H1 (cell line): ENCODE measurements at regions of chr17 and their contacts with region 1.

Region 1: DNA sequence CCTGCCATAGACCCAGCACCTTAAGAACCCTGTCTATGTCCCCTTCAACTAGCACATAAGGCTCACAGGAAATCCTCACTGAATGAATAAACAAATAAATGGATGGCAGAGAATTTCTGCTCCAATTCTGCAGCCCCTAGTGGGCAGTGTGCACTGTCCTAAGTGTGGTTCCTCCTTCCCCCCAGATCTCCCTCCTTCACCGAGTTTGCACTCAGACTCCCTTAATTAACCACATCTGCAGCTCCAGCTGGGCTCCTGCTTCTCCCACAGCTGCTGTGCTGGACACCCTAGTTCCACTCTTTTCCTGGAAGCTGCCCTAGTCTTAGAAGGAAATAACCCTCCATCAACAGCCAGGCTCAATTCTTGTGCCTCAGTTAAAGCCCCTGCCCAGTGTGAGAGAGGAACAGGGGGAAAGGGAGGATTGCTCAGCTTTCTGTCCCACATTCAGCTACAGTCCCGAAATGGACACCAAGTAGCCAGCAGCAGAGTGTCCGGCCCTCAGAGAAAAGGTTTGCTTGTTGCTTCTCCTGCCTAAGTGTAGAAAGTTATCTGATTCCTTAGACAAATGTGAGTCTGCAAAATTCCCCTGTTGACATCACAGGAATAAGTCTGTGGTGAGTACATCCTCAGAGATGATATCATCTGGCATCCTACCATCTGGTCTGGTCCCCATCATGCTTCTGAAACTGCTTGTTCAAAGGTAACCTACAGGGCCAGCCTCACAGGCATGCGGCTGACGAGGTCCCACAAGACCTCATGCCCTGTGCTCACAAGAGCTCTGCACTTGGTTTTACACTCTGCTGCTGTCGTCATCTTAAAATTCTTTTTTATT is 12.3 kb downstream of the LRRC3C start:
- DNase-seq: no peak
- H3K4me3 ChIP-seq: no peak overlapping the region
- H3K27ac ChIP-seq: no peak overlapping the region
- H3K4me1 ChIP-seq: peaks cover 0 to 3% (median 0%) of the 10 kb centered on the region in 4 experiments; a peak in 3 of 7 replicates
- H3K27me3 ChIP-seq: no peaks in the 10 kb centered on the region
- CTCF ChIP-seq: peak; percentile 17 to 38 (median 20); a peak in 3 of 4 replicates
- EP300 ChIP-seq: no peak
- POLR2A ChIP-seq: no peak
- RAD21 ChIP-seq: peak; percentile 19 to 31; a peak in 3 of 4 replicates

Region 2: DNA sequence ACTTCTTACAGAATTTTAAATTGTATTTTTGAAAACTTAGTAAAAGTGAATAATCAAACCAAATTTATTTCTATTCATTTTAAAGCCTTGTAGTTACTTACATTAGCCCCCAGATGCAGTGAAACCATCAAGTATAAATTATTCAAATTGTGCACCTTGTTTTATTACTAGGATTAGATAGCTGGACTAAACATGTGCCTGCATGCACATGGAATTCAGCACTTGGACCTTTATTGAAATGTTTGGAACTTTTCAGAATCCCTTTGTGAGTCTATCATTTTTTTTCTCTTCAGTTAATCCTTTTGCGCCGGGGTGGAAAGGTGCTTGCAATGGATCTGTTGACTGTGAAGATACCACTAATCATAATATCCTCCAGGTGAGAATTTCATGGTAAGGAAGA is 67.1 kb before region 1 on chr17:
- CTCF ChIA-PET with region 1: no interaction called
- POLR2A ChIA-PET with region 1: no interaction called
- DNase-seq: no peak
- H3K4me3 ChIP-seq: no peak overlapping the region
- H3K27ac ChIP-seq: no peak overlapping the region
- H3K4me1 ChIP-seq: no peaks in the 10 kb centered on the region; a peak in 1 of 7 replicates
- H3K27me3 ChIP-seq: peaks cover 0 to 4% (median 4%) of the 10 kb centered on the region in 4 experiments; a peak in 2 of 7 replicates
- CTCF ChIP-seq: no peak
- EP300 ChIP-seq: no peak
- POLR2A ChIP-seq: no peak
- RAD21 ChIP-seq: no peak

Region 3: GRCh38 chr17:39889200-39889599 is 50.6 kb before region 1 on chr17:
- CTCF ChIA-PET with region 1: no interaction called
- POLR2A ChIA-PET with region 1: no interaction called
- DNase-seq: no peak
- H3K4me3 ChIP-seq: no peak overlapping the region
- H3K27ac ChIP-seq: no peak overlapping the region
- H3K4me1 ChIP-seq: no peaks in the 10 kb centered on the region
- H3K27me3 ChIP-seq: no peaks in the 10 kb centered on the region
- CTCF ChIP-seq: no peak
- EP300 ChIP-seq: no peak
- POLR2A ChIP-seq: no peak
- RAD21 ChIP-seq: no peak

Region 4: GRCh38 chr17:39908789-39909352 is 30.9 kb before region 1 on chr17:
- CTCF ChIA-PET with region 1: no interaction called
- POLR2A ChIA-PET with region 1: no interaction called
- DNase-seq: no peak
- H3K4me3 ChIP-seq: no peak overlapping the region
- H3K27ac ChIP-seq: no peak overlapping the region
- H3K4me1 ChIP-seq: no peaks in the 10 kb centered on the region
- H3K27me3 ChIP-seq: no peaks in the 10 kb centered on the region
- CTCF ChIP-seq: no peak
- EP300 ChIP-seq: no peak
- POLR2A ChIP-seq: no peak
- RAD21 ChIP-seq: no peak

Region 5: DNA sequence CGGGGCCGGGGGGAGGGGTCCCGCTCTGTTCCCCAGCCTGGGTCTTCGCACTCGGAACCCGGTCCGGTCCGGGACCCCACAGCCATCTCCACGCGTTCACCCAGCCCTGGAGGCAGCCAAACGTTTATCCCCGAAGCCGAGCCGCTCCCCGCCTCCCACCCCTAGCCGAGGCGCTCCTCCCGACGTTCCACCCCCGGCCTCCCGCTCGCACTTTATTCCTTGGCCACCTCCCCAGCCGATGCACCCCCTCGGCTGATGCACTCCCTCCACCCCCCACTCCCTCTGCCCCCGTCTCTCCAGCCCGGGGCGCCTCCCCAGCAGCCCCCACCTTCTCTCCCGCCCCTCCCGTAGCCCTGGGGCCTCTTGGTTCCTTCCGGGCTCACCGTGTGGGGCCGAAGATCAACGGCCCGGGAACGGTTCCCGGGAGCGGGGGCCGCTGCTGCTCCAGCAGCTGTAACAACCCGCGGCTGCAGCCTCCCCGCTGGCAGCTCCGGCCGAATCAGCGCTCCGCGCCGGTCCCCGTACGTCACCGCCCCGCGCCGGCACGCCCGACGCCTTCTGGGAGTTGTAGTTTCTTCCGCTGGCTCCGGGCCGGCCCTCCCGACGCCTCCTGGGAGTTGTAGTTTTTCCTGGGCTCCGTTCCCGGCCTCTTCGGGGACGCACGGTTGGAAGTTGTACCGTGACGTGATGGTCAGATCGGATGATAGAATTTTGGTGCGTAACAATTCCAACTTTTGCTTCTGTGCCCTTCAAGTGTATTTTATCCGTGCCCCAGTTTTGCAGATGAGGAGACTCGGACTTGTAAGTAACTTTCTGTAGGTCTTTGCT is 12.5 kb before region 1 on chr17 and contains the starts of genes LRRC3C and ORMDL3:
- CTCF ChIA-PET with region 1: interaction called, 6 read pairs
- POLR2A ChIA-PET with region 1: interaction called, 10 read pairs
- DNase-seq: peak; percentile 74 to 98
- H3K4me3 ChIP-seq: peak within 1 kb of the TSS; percentile 75 to 94 (median 86)
- H3K27ac ChIP-seq: peak within 1 kb of the TSS; percentile 64; the same call in 1 of the 2 replicates
- H3K4me1 ChIP-seq: peaks cover 9 to 26% (median 14%) of the 10 kb centered on the region in 4 experiments
- H3K27me3 ChIP-seq: no peaks in the 10 kb centered on the region
- CTCF ChIP-seq: no peak
- EP300 ChIP-seq: peak in 1 of 2 experiments; percentile 17; a peak in 1 of 3 replicates
- POLR2A ChIP-seq: peak in 1 of 2 experiments; percentile 80; a peak in 2 of 3 replicates
- RAD21 ChIP-seq: no peak; a peak in 1 of 4 replicates
- total RNA-seq, gene LRRC3C: not detected in 2 replicates
- total RNA-seq, gene ORMDL3: 50.4 and 54.6 TPM in 2 replicates

Region 6: GRCh38 chr17:39952680-39953470 is 13.1 kb after region 1 on chr17:
- CTCF ChIA-PET with region 1: interaction called, 28 read pairs
- POLR2A ChIA-PET with region 1: interaction called, 3 read pairs
- DNase-seq: peak; percentile 97 to 100
- H3K4me3 ChIP-seq: peak overlapping the region; percentile 33 to 66 (median 49); a peak in 7 of 8 replicates
- H3K27ac ChIP-seq: no peak overlapping the region
- H3K4me1 ChIP-seq: peaks cover 0 to 13% (median 7%) of the 10 kb centered on the region in 4 experiments; a peak in 6 of 7 replicates
- H3K27me3 ChIP-seq: peaks cover 0 to 5% (median 2%) of the 10 kb centered on the region in 4 experiments; a peak in 3 of 7 replicates
- CTCF ChIP-seq: no peak
- EP300 ChIP-seq: no peak
- POLR2A ChIP-seq: no peak; a peak in 1 of 3 replicates
- RAD21 ChIP-seq: no peak

Region 7: DNA sequence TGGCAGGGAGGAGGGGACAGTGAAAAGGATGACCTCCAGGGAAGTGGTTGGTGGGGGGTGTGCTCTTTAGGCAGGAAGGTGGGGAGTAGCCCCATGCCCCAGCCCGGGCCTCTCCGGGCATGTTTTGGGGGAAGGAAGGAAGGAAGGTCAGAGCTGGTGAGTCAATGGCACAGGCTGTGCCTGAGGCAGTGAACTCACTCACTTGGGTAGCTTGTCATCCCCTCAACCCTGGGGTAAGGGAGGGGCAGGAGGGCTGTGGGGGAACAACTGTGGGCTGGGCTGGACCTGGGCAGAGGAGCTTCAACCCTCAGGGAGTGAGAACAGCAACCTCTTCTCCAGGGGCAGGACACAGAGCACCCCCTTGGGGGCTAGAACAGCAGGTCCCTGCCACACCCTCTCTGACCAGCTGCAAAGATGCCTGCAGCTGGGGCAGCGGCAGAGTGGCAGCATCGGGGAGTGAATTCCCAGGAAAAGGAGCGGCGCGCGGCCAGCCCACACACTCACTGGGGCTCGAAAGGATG is 81.7 kb after region 1 on chr17:
- CTCF ChIA-PET with region 1: no interaction called
- POLR2A ChIA-PET with region 1: no interaction called
- DNase-seq: no peak
- H3K4me3 ChIP-seq: no peak overlapping the region
- H3K27ac ChIP-seq: no peak overlapping the region
- H3K4me1 ChIP-seq: peaks cover 0 to 24% (median 16%) of the 10 kb centered on the region in 4 experiments; a peak in 6 of 7 replicates
- H3K27me3 ChIP-seq: no peaks in the 10 kb centered on the region
- CTCF ChIP-seq: no peak
- EP300 ChIP-seq: no peak
- POLR2A ChIP-seq: no peak
- RAD21 ChIP-seq: no peak